GM12878 (cell line): ENCODE measurements at regions of chr20 and their contacts with region 1.

Region 1: DNA sequence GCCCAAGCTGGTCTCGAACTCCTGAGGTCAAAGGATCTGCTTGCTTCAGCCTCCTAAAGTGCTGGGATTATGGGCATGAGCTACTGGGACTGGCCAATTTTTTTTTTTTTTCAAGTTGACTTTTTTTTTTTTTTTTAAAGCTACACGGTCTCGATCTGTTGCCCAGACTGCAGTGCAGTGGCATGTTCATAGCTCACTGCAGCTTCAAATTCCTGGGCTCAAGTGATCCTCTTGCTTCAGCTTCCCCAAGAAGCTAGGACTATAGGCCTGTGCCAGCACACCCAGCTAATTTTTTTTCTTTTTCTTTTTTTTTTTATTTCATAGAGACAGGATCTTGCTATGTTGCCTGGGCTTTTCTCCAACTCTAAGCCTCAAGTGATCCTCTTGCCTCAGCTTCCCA is 59.5 kb downstream of the NCOA3 start:
- DNase-seq: no peak
- ATAC-seq: no peak; the same call in 2 of the 3 replicates
- H3K4me3 ChIP-seq: no peak overlapping the region
- H3K27ac ChIP-seq: no peak overlapping the region
- H3K4me1 ChIP-seq: peaks cover 37% of the 10 kb centered on the region
- H3K27me3 ChIP-seq: no peaks in the 10 kb centered on the region
- CTCF ChIP-seq: no peak
- EP300 ChIP-seq: no peak
- POLR2A ChIP-seq: no peak
- RAD21 ChIP-seq: no peak

Region 2: GRCh38 chr20:47529840-47530239 is 31.3 kb before region 1 on chr20:
- CTCF ChIA-PET with region 1: interaction called, 3 read pairs
- POLR2A ChIA-PET with region 1: interaction called, 10 read pairs
- RAD21 ChIA-PET with region 1: no interaction called
- SMC1A ChIA-PET with region 1: interaction called, 4 read pairs
- in situ Hi-C with region 1: no loop called
- intact Hi-C with region 1: no loop called
- DNase-seq: no peak
- ATAC-seq: no peak
- H3K4me3 ChIP-seq: no peak overlapping the region
- H3K27ac ChIP-seq: no peak overlapping the region
- H3K4me1 ChIP-seq: peaks cover 17% of the 10 kb centered on the region
- H3K27me3 ChIP-seq: no peaks in the 10 kb centered on the region
- CTCF ChIP-seq: no peak
- EP300 ChIP-seq: no peak
- POLR2A ChIP-seq: no peak
- RAD21 ChIP-seq: no peak

Region 3: DNA sequence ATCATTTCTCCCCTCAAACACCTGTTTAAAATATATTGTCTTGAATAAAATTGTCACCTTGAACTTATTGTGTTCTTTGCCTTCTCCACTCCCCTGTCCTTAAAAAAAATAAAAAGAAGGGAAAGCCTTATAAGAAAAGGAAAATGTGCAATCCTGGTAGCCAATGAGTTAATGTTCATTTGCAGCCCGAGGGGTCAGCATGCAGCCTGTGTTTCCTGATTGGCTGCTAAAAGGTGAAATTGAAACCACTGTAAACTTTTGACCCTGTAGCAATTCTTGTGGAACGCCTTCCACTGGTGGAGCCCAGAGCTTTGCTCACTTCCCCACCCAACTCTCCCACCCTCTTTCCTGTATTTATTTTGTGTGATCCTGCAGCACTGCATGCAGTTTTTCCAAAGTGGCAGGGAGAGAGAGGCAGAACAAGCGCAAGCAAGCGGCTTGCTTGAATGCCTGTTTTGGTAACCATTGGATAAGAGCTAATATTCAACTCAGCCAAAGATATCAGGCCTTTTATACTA is 15.4 kb after region 1 on chr20:
- CTCF ChIA-PET with region 1: interaction called, 5 read pairs
- POLR2A ChIA-PET with region 1: interaction called, 8 read pairs
- RAD21 ChIA-PET with region 1: interaction called, 9 read pairs
- SMC1A ChIA-PET with region 1: interaction called, 19 read pairs
- in situ Hi-C with region 1: no loop called
- intact Hi-C with region 1: no loop called
- DNase-seq: peak; percentile 46
- ATAC-seq: peak; percentile 85
- H3K4me3 ChIP-seq: peak overlapping the region; percentile 45
- H3K27ac ChIP-seq: peak overlapping the region; percentile 74
- H3K4me1 ChIP-seq: peaks cover 52% of the 10 kb centered on the region
- H3K27me3 ChIP-seq: no peaks in the 10 kb centered on the region
- CTCF ChIP-seq: no peak
- EP300 ChIP-seq: no peak
- POLR2A ChIP-seq: no peak
- RAD21 ChIP-seq: no peak

Region 4: GRCh38 chr20:47585087-47585747 is 24.0 kb after region 1 on chr20:
- CTCF ChIA-PET with region 1: no interaction called
- POLR2A ChIA-PET with region 1: interaction called, 10 read pairs
- RAD21 ChIA-PET with region 1: no interaction called
- SMC1A ChIA-PET with region 1: interaction called, 4 read pairs
- in situ Hi-C with region 1: no loop called
- intact Hi-C with region 1: no loop called
- DNase-seq: no peak
- ATAC-seq: peak; percentile 57
- H3K4me3 ChIP-seq: no peak overlapping the region
- H3K27ac ChIP-seq: peak overlapping the region; percentile 45
- H3K4me1 ChIP-seq: peaks cover 26% of the 10 kb centered on the region
- H3K27me3 ChIP-seq: no peaks in the 10 kb centered on the region
- CTCF ChIP-seq: no peak
- EP300 ChIP-seq: no peak
- POLR2A ChIP-seq: no peak
- RAD21 ChIP-seq: no peak